AG04449 (cell line): ENCODE measurements at regions of chr22 and their contacts with region 1.

Region 1: GRCh38 chr22:40436505-40437451 is 66.4 kb downstream of the SGSM3 start:
- DNase-seq: no peak
- H3K4me3 ChIP-seq: no peak overlapping the region
- CTCF ChIP-seq: no peak

Region 2: DNA sequence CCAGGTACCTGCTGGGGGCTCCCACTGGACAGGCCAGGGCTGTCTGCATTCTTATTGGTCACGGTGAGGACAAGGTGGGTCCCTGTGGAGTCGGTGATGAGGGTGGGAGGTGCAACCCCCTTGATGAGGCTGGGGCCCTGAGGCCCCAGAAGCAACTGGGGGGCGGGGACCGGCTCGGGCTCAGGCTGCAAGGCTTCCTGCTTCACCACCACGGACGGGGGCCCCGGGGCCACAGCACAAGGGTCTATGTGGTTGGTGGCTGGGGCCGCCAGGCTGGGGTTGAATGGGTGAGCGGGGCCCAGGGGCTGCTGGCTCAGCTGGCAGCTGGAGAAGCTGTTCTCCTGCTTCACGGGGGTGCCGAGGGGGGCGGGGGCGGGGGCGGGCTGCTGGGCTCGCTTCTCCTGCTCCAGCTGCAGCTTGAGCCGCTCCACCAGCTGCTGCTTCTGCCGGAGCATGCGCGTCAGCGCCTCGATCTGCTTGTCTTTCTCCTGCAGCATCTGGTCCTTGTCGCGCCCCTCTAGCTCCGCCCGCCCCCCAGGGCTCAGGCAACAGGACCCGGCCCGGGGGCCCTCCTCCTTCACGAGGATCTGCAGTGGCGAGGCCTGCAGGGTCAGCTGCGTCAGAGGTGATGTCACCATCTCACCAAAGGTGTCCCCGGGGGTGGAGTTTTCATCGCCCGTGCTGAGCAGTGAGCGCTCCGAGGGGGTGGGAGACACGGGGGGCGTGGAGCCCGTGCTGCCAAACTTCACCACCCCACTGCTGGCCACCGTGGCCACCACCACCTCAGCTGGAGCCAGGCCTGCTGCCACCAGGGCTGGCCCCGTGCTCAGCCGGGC is 18.2 kb before region 1 on chr22:
- CTCF ChIA-PET with region 1: interaction called, 64 read pairs
- POLR2A ChIA-PET with region 1: no interaction called
- DNase-seq: no peak
- H3K4me3 ChIP-seq: no peak overlapping the region
- CTCF ChIP-seq: no peak

Region 3: DNA sequence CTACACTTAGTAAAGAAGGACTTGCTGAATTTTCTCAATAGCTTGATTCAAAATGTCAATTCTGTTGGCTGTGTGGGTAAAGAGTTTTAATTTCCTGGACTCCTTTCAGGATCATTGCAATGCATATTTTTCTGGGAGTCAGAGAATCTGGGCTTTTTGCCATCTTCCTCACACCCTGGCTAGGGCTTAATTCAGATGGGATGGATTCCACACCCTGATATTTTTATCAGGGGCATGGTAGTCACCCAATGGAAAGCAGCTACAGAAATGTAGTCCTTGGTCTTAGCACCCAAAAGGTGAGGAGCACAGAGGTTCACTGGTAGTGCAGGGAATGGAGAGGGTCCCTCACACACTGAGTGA is 12.9 kb after region 1 on chr22:
- CTCF ChIA-PET with region 1: interaction called, 120 read pairs
- POLR2A ChIA-PET with region 1: no interaction called
- DNase-seq: peak; percentile 19
- H3K4me3 ChIP-seq: no peak overlapping the region
- CTCF ChIP-seq: no peak

Region 4: GRCh38 chr22:40479126-40479800 is 42.5 kb after region 1 on chr22:
- CTCF ChIA-PET with region 1: interaction called, 20 read pairs
- POLR2A ChIA-PET with region 1: no interaction called
- DNase-seq: no peak
- H3K4me3 ChIP-seq: no peak overlapping the region
- CTCF ChIP-seq: no peak

Region 5: DNA sequence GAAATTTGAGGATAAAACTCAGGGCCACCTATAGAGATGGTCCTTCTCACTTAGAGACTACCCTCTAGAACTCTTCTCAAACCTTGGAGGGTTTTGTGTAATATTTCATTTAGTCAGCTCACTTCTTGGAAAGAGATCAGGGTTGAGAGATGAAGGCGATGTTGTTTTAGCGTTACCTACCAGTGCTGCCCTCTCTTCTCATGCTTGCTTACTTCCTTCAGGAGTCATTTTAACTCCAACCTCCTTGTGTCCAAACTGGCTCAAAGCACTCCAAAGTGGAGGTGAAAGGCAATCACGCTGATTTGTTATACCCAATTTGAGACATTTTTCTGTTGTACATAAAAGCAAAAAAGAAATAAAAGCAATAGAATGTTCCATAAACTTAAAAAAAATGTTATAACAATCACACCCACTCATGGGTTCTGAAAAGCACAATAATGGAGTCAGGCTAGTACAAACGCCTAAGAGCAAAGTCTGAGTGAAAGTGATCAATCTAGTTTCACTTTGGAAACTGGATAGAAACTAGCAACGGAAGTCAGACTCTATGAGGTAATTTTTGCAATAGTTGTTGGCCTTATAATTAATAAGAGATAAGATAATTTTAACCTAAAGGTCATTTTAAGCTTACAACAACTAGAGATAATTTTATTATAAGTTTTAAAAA is 82.6 kb after region 1 on chr22:
- CTCF ChIA-PET with region 1: interaction called, 30 read pairs
- POLR2A ChIA-PET with region 1: no interaction called
- DNase-seq: no peak
- H3K4me3 ChIP-seq: no peak overlapping the region
- CTCF ChIP-seq: no peak

Region 6: DNA sequence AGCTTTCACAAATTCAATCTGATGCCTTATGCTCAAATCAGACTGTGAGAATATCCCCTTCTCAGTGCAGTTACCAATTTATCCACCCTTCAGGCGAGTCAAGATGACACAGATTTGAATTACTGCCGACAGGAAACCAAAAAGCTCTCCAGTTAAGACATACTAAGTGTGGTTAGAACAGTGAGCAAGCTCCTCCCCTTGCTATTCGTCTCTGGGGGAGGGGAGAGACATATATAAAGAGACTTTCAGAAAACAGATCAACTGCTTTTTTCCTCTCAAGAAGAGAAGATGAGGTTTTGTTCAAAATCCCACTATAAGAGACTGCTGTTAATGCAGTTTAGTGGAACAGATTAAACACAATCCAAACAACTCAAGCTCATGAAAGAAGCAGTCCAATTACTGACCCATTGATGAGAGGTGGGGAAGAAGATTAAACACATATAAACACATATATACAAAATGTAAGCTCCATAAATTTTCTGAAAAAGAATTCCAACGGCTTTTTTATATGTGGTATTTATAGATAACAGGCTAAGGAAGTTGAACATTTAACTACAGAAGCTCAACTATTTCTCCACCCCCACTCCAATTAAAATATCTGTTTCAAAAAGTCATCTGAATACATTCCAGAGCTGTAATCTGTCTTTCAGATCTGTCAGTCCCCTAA is 97.1 kb after region 1 on chr22:
- CTCF ChIA-PET with region 1: interaction called, 16 read pairs
- POLR2A ChIA-PET with region 1: no interaction called
- DNase-seq: no peak
- H3K4me3 ChIP-seq: peak overlapping the region; percentile 56
- CTCF ChIP-seq: no peak

Region 7: DNA sequence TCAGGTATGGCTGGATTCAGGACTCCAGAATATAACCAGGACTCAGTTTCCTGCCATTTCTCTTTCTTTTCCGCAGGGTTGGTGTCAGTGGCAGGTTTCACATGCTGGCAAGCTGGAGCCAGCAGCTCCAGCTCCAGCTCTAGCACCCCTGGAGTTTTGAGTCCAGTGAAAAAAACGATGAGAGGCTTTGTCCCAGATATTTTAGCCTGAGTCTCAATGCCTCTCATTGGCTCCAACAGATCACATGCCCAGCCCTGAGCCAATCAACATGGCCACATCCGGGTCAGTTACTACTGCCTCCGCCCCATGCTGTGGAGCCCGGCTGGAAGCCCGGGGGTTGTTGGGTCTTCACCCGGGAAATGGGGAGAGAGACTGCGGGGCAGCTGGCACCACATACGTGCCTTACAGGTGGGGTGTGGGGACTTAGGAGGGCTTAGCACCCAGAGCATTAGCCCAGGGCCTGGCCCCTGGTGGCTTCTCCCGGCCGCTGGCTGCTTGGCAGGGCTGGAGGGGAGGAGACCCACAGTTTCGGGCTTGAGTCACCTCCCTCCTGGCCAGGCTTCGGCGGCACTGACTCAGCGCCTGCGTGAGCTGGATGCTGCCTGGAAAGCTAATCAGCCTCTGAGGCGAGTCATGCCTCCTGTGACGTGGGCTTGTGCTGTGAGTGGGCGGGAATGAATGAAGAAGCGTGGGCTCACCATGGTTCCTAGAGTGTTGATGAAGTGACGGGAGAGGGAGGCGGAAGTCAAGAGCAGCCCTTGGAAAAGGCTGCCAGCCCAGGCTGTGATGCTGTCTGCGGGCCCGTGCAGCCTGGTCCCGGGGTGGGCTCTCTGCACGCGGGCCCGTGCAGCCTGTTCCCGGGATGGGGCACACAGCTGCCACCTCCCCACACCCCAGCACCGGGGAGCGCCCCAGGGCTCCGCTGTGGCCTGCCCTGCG is 215.1 kb after region 1 on chr22:
- CTCF ChIA-PET with region 1: interaction called, 233 read pairs
- POLR2A ChIA-PET with region 1: interaction called, 3 read pairs
- DNase-seq: peak; percentile 97
- H3K4me3 ChIP-seq: peak overlapping the region; percentile 80
- CTCF ChIP-seq: no peak